WTC11 (cell line): ENCODE measurements at regions of chr11 and their contacts with region 1.

Region 1: GRCh38 chr11:34174412-34175041 is 69.1 kb downstream of the NAT10 start:
- DNase-seq: peak; percentile 92
- ATAC-seq: peak; percentile 95
- H3K4me3 Mint-ChIP-seq: peak overlapping the region; percentile 67
- H3K27ac Mint-ChIP-seq: no peak overlapping the region
- H3K4me1 Mint-ChIP-seq: peaks cover 10% of the 10 kb centered on the region; the same call in 1 of the 2 replicates
- H3K27me3 Mint-ChIP-seq: no peaks in the 10 kb centered on the region
- CTCF ChIP-seq: peak; percentile 67

Region 2: DNA sequence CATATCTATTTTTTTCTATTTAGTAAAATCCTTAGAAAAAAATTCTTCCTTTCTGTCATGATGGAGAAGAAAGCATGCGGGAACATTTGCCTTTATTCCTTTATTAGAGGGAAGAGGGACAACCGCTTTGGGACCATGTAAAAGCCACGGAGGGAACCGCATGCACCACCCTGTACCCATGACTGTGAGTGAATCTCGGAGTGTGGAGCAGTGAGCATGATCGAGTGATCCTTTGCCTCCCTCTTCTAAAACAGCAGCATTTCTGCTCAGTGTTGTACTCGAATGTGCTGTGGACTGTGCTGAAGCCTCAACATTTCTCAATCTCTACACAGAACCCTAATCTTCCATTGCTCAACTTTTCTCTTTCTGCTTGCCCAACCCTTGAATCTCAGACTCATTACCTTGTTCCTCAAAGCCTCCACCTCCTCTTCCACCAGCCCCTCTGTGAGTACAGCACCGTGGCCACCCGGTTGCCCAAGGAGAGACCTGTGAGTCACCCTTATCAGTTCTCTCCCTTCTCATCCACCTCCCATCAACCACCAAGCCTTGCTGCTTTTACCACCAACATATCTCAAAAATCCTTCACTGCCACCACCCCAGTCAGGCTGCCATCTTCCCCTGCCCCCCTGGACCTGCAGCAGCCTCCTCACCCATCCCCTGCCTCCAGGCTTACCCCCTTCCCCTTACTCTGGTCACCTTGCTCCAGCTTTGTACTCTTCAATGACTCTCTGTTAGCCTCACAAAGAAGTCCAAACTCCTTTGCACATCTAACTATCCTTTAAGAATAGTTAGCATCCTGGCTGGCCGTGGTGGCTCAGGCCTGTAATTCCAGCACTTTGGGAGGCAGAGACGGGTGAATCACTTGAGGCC is 34.0 kb after region 1 on chr11:
- CTCF ChIA-PET with region 1: interaction called, 19 read pairs
- POLR2A ChIA-PET with region 1: no interaction called
- DNase-seq: no peak
- ATAC-seq: no peak
- H3K4me3 Mint-ChIP-seq: no peak overlapping the region
- H3K27ac Mint-ChIP-seq: peak overlapping the region; percentile 3; the same call in 1 of the 2 replicates
- H3K4me1 Mint-ChIP-seq: peaks cover 47% of the 10 kb centered on the region
- H3K27me3 Mint-ChIP-seq: no peaks in the 10 kb centered on the region
- CTCF ChIP-seq: no peak

Region 3: DNA sequence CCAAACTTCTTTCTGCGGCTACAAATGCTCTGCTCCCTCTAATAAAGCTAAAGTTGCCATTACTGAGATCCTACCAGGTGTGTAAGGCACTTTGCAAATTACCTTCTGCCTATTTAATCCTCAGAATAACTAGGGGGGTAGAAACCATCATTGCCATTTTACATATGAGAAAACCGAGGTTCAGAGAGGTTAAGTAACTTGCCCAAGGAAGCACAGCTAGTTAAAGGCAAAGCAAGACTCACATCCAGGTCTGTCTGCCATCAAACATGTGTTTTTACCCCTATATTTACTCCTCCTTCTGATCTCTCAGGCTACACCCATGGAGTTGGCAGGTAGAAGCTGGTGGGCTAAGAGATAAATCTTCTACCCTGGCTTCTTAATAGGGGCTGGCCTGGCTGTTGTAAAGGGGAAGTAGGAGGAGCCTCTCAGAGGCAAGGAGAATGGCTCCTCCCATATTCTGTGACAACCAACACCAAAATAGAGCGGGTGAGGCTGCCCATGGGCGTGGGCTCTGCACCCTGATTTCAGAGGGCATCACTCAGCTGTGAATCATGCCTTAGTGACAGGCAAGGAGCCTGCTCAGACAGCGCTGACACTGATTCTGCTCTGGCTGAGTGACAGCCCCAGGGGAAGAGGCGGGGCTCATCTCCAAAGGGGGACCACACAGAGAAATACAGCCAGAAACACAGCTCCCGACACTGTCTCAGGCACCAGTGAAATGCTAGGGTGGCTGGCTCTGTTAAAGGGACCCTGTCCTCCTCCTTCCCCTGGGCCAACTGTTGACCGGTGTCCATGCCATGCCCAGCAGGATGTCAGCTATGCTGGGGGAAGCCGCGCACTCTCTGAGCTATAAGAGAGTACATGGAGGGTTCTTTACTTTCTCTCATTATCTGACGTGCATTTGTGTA is 76.5 kb after region 1 on chr11:
- CTCF ChIA-PET with region 1: interaction called, 24 read pairs
- POLR2A ChIA-PET with region 1: no interaction called
- DNase-seq: peak; percentile 28
- ATAC-seq: peak; percentile 88
- H3K4me3 Mint-ChIP-seq: no peak overlapping the region; the same call in 1 of the 2 replicates
- H3K27ac Mint-ChIP-seq: 0 out of 2 replicates have a peak overlapping the region, but pooled peaks have one; percentile 79
- H3K4me1 Mint-ChIP-seq: peaks cover 18% of the 10 kb centered on the region
- H3K27me3 Mint-ChIP-seq: no peaks in the 10 kb centered on the region
- CTCF ChIP-seq: no peak

Region 4: GRCh38 chr11:34335331-34335730 is 160.8 kb after region 1 on chr11:
- CTCF ChIA-PET with region 1: interaction called, 46 read pairs
- POLR2A ChIA-PET with region 1: no interaction called
- DNase-seq: no peak
- ATAC-seq: no peak
- H3K4me3 Mint-ChIP-seq: no peak overlapping the region
- H3K27ac Mint-ChIP-seq: no peak overlapping the region
- H3K4me1 Mint-ChIP-seq: peaks cover 27% of the 10 kb centered on the region
- H3K27me3 Mint-ChIP-seq: no peaks in the 10 kb centered on the region
- CTCF ChIP-seq: no peak

Region 5: GRCh38 chr11:34366522-34366921 is 192.0 kb after region 1 on chr11:
- CTCF ChIA-PET with region 1: interaction called, 28 read pairs
- POLR2A ChIA-PET with region 1: interaction called, 3 read pairs
- DNase-seq: peak; percentile 19
- ATAC-seq: no peak
- H3K4me3 Mint-ChIP-seq: no peak overlapping the region
- H3K27ac Mint-ChIP-seq: 0 out of 2 replicates have a peak overlapping the region, but pooled peaks have one; percentile 41
- H3K4me1 Mint-ChIP-seq: peaks cover 11% of the 10 kb centered on the region
- H3K27me3 Mint-ChIP-seq: no peaks in the 10 kb centered on the region
- CTCF ChIP-seq: no peak